ENCODE measurements at regions of chr1 and their contacts with region 1.

Region 1: GRCh38 chr1:43763497-43763973 is 56.2 kb downstream of the ST3GAL3 start:
- DNase-seq: peak; percentile 79 to 82
- H3K4me3 ChIP-seq: no peak overlapping the region
- H3K27ac ChIP-seq: no peak overlapping the region
- H3K4me1 ChIP-seq: peaks cover 0 to 10% (median 2%) of the 10 kb centered on the region in 4 donors
- H3K27me3 ChIP-seq: no peaks in the 10 kb centered on the region
- CTCF ChIP-seq: peak; percentile 77 to 93

Region 2: GRCh38 chr1:43934101-43934985 is 170.8 kb after region 1 on chr1:
- intact Hi-C with region 1: loop called (anchors 2 kb)
- DNase-seq: no peak
- H3K4me3 ChIP-seq: peak overlapping the region; percentile 44 to 51
- H3K27ac ChIP-seq: peak overlapping the region in 1 of 2 donors; percentile 14
- H3K4me1 ChIP-seq: peaks cover 0 to 41% (median 27%) of the 10 kb centered on the region in 4 donors
- H3K27me3 ChIP-seq: peaks cover 0 to 13% of the 10 kb centered on the region in 2 donors
- CTCF ChIP-seq: peak; percentile 84 to 87

Region 3: GRCh38 chr1:44036409-44037139 is 273.0 kb after region 1 on chr1:
- intact Hi-C with region 1: loop called (anchors 5 kb)
- DNase-seq: peak; percentile 67 to 79
- H3K4me3 ChIP-seq: no peak overlapping the region
- H3K27ac ChIP-seq: peak overlapping the region; percentile 71 to 76
- H3K4me1 ChIP-seq: peaks cover 9 to 37% (median 29%) of the 10 kb centered on the region in 4 donors
- H3K27me3 ChIP-seq: no peaks in the 10 kb centered on the region
- CTCF ChIP-seq: peak; percentile 80 to 90

Region 4: GRCh38 chr1:44049839-44050238 is 286.3 kb after region 1 on chr1:
- intact Hi-C with region 1: loop called (anchors 5 kb)
- DNase-seq: no peak
- H3K4me3 ChIP-seq: no peak overlapping the region
- H3K27ac ChIP-seq: no peak overlapping the region
- H3K4me1 ChIP-seq: peaks cover 0 to 16% (median 9%) of the 10 kb centered on the region in 4 donors
- H3K27me3 ChIP-seq: no peaks in the 10 kb centered on the region
- CTCF ChIP-seq: no peak

Region 5: DNA sequence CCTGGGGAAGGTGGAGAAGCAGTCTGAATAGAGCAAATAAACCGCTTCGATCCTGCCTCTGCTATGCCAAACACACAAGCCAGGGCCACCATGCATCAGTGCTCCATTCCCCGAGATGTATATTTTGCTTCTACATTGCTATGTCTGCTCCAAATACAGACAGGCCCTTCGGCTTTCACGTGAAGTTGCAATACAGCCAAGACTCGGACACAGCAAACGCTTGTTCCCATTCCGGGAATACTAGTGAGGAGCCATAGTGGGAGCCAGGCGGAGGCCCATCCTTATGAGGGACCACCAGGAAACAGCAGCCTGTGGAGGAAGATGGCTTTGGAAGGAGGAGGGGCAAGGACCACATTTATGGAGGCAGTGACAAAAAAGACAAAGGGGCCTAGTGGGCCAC is 569.0 kb after region 1 on chr1:
- intact Hi-C with region 1: no loop called
- DNase-seq: no peak
- H3K4me3 ChIP-seq: no peak overlapping the region
- H3K27ac ChIP-seq: no peak overlapping the region
- H3K4me1 ChIP-seq: peaks cover 0 to 20% (median 14%) of the 10 kb centered on the region in 4 donors
- H3K27me3 ChIP-seq: no peaks in the 10 kb centered on the region
- CTCF ChIP-seq: no peak